ENCODE measurements at regions of chr5 and their contacts with region 1.

Region 1: DNA sequence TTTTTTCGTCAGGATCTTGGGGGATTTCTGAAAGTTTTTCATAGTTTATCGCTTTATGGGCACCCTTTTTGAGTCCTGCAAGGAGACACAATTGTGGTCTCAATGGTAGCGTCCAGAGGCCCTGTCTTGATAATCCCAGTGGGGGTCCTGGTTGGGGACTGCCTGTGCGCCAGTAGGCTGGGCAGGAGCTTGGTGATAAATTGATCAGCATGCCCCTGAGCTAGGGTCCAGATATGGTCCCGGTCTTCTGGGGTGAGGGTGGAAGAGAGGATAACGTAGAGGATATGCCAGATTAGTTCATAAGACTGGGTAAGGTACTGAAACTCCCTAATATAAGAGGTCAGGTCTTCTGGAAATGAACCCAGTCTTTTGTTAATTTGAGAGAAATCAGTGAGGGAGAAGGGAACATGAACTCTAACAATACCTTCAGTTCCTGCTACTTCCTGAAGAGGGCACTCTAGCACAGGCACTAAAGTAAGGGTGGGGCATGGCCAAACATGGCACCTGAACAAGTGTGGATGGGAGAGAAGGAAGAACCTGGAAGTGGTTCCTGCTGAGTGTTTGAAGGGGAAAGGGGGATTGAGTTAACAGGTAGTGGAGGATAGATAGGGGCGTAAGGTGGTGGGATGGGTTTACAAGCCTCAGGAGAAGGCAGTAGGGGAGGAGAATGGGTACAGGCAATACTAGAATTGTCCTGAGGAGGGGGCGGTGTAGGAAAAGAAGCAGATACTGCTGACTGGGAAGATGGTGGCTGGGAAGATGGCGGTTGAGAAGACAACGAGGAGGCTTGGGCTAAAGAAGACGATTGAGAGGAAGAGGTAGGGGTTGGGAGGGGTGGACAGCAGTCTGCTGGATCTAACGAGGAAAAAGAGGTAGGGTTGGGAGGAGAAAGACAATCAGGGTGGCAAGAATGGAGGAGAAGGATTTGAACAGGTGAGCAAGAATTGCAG is 33.8 kb upstream of the ANXA2R start:
- DNase-seq: no peak
- ATAC-seq: peak in 3 of 4 donors; percentile 66 to 75 (median 72)
- H3K4me3 ChIP-seq: no peak overlapping the region
- H3K27ac ChIP-seq: peak overlapping the region; percentile 84
- H3K4me1 ChIP-seq: peaks cover 22% of the 10 kb centered on the region
- H3K27me3 ChIP-seq: no peaks in the 10 kb centered on the region
- CTCF ChIP-seq: peak; percentile 54

Region 2: GRCh38 chr5:41788800-41789395 is 1285.0 kb before region 1 on chr5:
- intact Hi-C with region 1: no loop called
- DNase-seq: no peak
- ATAC-seq: no peak
- H3K4me3 ChIP-seq: no peak overlapping the region
- H3K27ac ChIP-seq: no peak overlapping the region
- H3K4me1 ChIP-seq: peaks cover 4% of the 10 kb centered on the region
- H3K27me3 ChIP-seq: no peaks in the 10 kb centered on the region
- CTCF ChIP-seq: no peak

Region 3: DNA sequence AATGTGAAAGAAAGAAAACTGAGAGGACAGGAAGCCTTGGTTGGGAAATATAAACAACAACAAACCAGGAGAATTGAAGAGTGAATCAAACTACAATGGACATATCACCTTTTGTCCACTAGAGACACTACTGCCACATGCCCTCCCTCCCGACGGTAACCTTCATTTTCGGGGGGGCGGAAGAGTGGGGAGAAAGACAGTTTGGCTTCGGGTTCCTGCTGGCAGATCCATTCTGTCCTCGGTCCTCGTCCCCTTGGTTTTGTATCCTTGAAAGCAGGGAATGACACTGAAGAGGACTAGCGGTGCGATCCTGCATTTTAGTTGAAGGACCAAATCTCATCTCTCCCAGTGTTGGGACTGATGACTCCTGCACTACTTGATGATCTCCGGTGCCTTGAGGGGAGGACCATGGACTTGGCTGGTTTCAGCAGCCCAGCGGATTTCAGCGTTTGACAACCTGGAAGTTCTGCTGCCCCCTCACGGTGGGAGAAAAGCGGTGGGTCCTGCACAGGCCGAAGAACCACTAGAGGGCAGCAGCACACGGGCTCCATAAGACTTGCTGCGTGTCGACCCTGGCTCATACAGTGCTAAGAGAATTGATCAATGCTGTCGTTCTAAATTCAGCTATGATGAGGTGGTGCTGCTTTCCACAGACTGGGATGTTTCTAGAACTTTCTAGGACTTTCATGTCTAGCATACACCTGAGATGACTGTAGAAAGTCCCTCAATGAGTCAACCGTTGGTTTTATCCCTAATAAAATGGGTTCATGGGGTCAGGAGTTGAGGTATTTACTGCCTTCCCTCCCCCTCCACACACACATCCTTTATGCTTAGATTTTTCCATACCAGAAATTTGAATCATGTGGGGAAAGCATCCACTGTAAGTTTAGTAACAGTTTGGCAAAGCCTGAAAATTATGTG is 31.8 kb after region 1 on chr5:
- intact Hi-C with region 1: loop called in 1 of 2 experiments (anchors 1 kb)
- DNase-seq: peak; percentile 88 to 94
- ATAC-seq: peak; percentile 97 to 98 (median 98)
- H3K4me3 ChIP-seq: peak overlapping the region; percentile 69
- H3K27ac ChIP-seq: peak overlapping the region; percentile 74
- H3K4me1 ChIP-seq: no peaks in the 10 kb centered on the region
- H3K27me3 ChIP-seq: no peaks in the 10 kb centered on the region
- CTCF ChIP-seq: peak; percentile 98

Region 4: GRCh38 chr5:43305948-43306565 is 232.2 kb after region 1 on chr5:
- intact Hi-C with region 1: loop called in 1 of 2 experiments (anchors 5 kb)
- DNase-seq: no peak
- ATAC-seq: peak in 2 of 4 donors; percentile 44 to 84
- H3K4me3 ChIP-seq: no peak overlapping the region
- H3K27ac ChIP-seq: no peak overlapping the region
- H3K4me1 ChIP-seq: peaks cover 5% of the 10 kb centered on the region
- H3K27me3 ChIP-seq: no peaks in the 10 kb centered on the region
- CTCF ChIP-seq: peak; percentile 65

Region 5: GRCh38 chr5:43664501-43665040 is 590.7 kb after region 1 on chr5:
- intact Hi-C with region 1: no loop called
- DNase-seq: no peak
- ATAC-seq: peak in 1 of 4 donors; percentile 32
- H3K4me3 ChIP-seq: no peak overlapping the region
- H3K27ac ChIP-seq: no peak overlapping the region
- H3K4me1 ChIP-seq: no peaks in the 10 kb centered on the region
- H3K27me3 ChIP-seq: no peaks in the 10 kb centered on the region
- CTCF ChIP-seq: no peak